Naive thymus-derived CD4-positive, alpha-beta T cell (primary cell): ENCODE measurements at regions of chr2 and their contacts with region 1.

Region 1: GRCh38 chr2:86440631-86441391 is at the start of gene KDM3A:
- DNase-seq: peak; percentile 95 to 100 (median 99)
- ATAC-seq: peak; percentile 87
- H3K4me3 ChIP-seq: peak within 1 kb of the TSS; percentile 88
- H3K4me3 Mint-ChIP-seq: peak within 1 kb of the TSS; percentile 92 to 99 (median 97)
- H3K27ac ChIP-seq: peak within 1 kb of the TSS; percentile 78
- H3K27ac Mint-ChIP-seq: peak within 1 kb of the TSS; percentile 97 to 99 (median 99)
- H3K4me1 ChIP-seq: peaks cover 31 to 34% of the 10 kb centered on the region in 2 donors
- H3K4me1 Mint-ChIP-seq: peaks cover 34 to 51% (median 44%) of the 10 kb centered on the region in 7 donors
- H3K27me3 ChIP-seq: no peaks in the 10 kb centered on the region
- H3K27me3 Mint-ChIP-seq: peaks cover 0 to 10% (median 0%) of the 10 kb centered on the region in 5 donors
- total RNA-seq, gene KDM3A: 132 to 191 (median 169) TPM

Region 2: GRCh38 chr2:85611705-85612587 is 828.9 kb before region 1 on chr2 and contains the start of gene C2orf68:
- CTCF ChIA-PET with region 1: no interaction called
- POLR2A ChIA-PET with region 1: interaction called, 3 read pairs
- intact Hi-C with region 1: loop called (anchors 1 to 10 kb)
- DNase-seq: peak; percentile 61 to 92 (median 75)
- ATAC-seq: peak; percentile 76
- H3K4me3 ChIP-seq: peak within 1 kb of the TSS; percentile 65
- H3K4me3 Mint-ChIP-seq: peak within 1 kb of the TSS; percentile 96 to 100 (median 98)
- H3K27ac ChIP-seq: peak within 1 kb of the TSS; percentile 81
- H3K27ac Mint-ChIP-seq: peak within 1 kb of the TSS; percentile 86 to 99 (median 96)
- H3K4me1 ChIP-seq: peaks cover 11 to 16% of the 10 kb centered on the region in 2 donors
- H3K4me1 Mint-ChIP-seq: peaks cover 14 to 52% (median 44%) of the 10 kb centered on the region in 7 donors
- H3K27me3 ChIP-seq: no peaks in the 10 kb centered on the region
- H3K27me3 Mint-ChIP-seq: no peaks in the 10 kb centered on the region
- total RNA-seq, gene C2orf68: 40.9 to 92.1 (median 51.6) TPM

Region 3: DNA sequence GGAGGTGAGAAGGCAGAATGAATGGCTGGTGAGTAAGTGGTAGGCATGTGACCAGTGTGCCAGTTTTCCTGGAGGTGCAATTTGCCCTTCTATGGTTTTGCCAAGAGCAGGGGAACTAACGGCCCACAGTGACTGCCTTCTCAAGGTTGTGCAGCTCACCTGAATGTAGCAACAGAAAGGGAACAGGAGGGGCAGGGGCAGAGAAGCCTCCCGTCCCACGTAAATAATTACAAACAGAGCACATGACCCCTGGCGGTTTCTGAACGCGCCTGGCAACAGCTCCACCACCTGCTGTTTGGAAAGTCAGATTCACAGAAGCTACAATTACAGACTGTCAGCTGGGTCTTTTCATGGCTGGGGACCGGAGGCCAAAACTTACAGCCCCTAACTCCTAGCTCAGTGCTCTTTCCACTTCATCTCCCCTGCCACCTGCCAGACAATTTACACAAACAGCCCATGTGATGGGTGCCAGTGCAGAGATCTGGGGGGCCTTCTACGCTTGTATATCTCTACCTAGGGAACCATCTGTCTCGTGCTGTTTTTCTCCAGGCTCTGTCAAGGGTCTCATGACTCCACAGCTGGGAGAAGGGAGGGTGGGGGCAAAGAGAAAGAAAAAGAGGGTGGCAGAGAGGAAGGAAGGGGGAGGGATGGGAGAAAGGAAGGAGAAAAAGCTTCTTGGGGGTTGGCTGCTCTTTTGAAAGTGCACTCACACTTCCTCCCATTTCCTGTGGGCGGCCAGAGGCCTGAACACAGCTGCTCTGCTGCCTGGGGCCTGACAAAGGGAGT is 404.7 kb before region 1 on chr2:
- CTCF ChIA-PET with region 1: no interaction called
- POLR2A ChIA-PET with region 1: interaction called, 7 read pairs
- intact Hi-C with region 1: loop called (anchors 2 to 5 kb)
- DNase-seq: peak in 8 of 9 donors; percentile 63 to 89 (median 84)
- ATAC-seq: peak; percentile 65
- H3K4me3 ChIP-seq: peak overlapping the region; percentile 48
- H3K4me3 Mint-ChIP-seq: peak overlapping the region; percentile 80 to 88 (median 86)
- H3K27ac ChIP-seq: peak overlapping the region; percentile 88
- H3K27ac Mint-ChIP-seq: peak overlapping the region; percentile 94 to 100 (median 100)
- H3K4me1 ChIP-seq: peaks cover 55 to 84% of the 10 kb centered on the region in 2 donors
- H3K4me1 Mint-ChIP-seq: peaks cover 57 to 92% (median 88%) of the 10 kb centered on the region in 7 donors
- H3K27me3 ChIP-seq: no peaks in the 10 kb centered on the region
- H3K27me3 Mint-ChIP-seq: peaks cover 0 to 5% (median 0%) of the 10 kb centered on the region in 5 donors

Region 4: GRCh38 chr2:86201671-86202335 is 239.0 kb before region 1 on chr2:
- CTCF ChIA-PET with region 1: no interaction called
- POLR2A ChIA-PET with region 1: interaction called, 43 read pairs
- intact Hi-C with region 1: loop called (anchors 1 kb)
- DNase-seq: no peak
- ATAC-seq: no peak
- H3K4me3 ChIP-seq: no peak overlapping the region
- H3K4me3 Mint-ChIP-seq: peak overlapping the region in 8 of 10 donors; percentile 27 to 95 (median 46)
- H3K27ac ChIP-seq: no peak overlapping the region
- H3K27ac Mint-ChIP-seq: peak overlapping the region in 5 of 9 donors; percentile 6 to 82 (median 55)
- H3K4me1 ChIP-seq: peaks cover 0 to 4% of the 10 kb centered on the region in 2 donors
- H3K4me1 Mint-ChIP-seq: peaks cover 22 to 58% (median 45%) of the 10 kb centered on the region in 7 donors
- H3K27me3 ChIP-seq: no peaks in the 10 kb centered on the region
- H3K27me3 Mint-ChIP-seq: no peaks in the 10 kb centered on the region

Region 5: DNA sequence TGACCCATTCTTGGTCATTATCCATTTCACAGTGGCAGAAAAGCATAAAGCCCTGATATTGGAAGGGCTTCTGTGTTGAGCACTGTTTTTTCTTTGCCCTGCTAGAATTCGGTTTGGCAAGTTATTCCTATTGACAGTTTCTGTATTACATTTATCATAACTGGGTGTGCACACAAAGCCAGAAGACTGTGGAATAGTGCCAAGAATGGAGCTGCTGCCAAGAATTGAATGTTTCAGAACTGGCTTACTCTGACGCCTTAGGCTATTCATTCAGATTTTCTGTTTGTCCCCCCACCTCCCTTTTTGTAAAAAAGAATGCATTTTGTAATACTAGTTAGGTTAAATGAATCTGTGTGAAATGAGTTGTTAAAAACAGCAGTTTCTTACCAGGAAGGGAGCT is 13.0 kb after region 1 on chr2:
- CTCF ChIA-PET with region 1: interaction called, 4 read pairs
- POLR2A ChIA-PET with region 1: interaction called, 40 read pairs
- intact Hi-C with region 1: no loop called
- DNase-seq: no peak
- ATAC-seq: no peak
- H3K4me3 ChIP-seq: no peak overlapping the region
- H3K4me3 Mint-ChIP-seq: no peak overlapping the region
- H3K27ac ChIP-seq: no peak overlapping the region
- H3K27ac Mint-ChIP-seq: no peak overlapping the region
- H3K4me1 ChIP-seq: peaks cover 0 to 7% of the 10 kb centered on the region in 2 donors
- H3K4me1 Mint-ChIP-seq: peaks cover 21 to 59% (median 42%) of the 10 kb centered on the region in 7 donors
- H3K27me3 ChIP-seq: no peaks in the 10 kb centered on the region
- H3K27me3 Mint-ChIP-seq: no peaks in the 10 kb centered on the region

Region 6: GRCh38 chr2:86480105-86480504 is 39.3 kb after region 1 on chr2:
- CTCF ChIA-PET with region 1: no interaction called
- POLR2A ChIA-PET with region 1: interaction called, 12 read pairs
- intact Hi-C with region 1: no loop called
- DNase-seq: no peak
- ATAC-seq: no peak
- H3K4me3 ChIP-seq: no peak overlapping the region
- H3K4me3 Mint-ChIP-seq: no peak overlapping the region
- H3K27ac ChIP-seq: no peak overlapping the region
- H3K27ac Mint-ChIP-seq: peak overlapping the region in 7 of 9 donors; percentile 5 to 64 (median 12)
- H3K4me1 ChIP-seq: no peaks in the 10 kb centered on the region
- H3K4me1 Mint-ChIP-seq: peaks cover 2 to 55% (median 24%) of the 10 kb centered on the region in 7 donors
- H3K27me3 ChIP-seq: no peaks in the 10 kb centered on the region
- H3K27me3 Mint-ChIP-seq: no peaks in the 10 kb centered on the region

Region 7: GRCh38 chr2:86623651-86624541 is 183.1 kb after region 1 on chr2 and contains the start of gene RNF103:
- CTCF ChIA-PET with region 1: interaction called, 4 read pairs
- POLR2A ChIA-PET with region 1: interaction called, 26 read pairs
- intact Hi-C with region 1: loop called (anchors 1 kb)
- DNase-seq: peak; percentile 83 to 97 (median 88)
- ATAC-seq: peak; percentile 93
- H3K4me3 ChIP-seq: peak within 1 kb of the TSS; percentile 85
- H3K4me3 Mint-ChIP-seq: peak within 1 kb of the TSS; percentile 86 to 99 (median 93)
- H3K27ac ChIP-seq: peak within 1 kb of the TSS; percentile 97
- H3K27ac Mint-ChIP-seq: peak within 1 kb of the TSS; percentile 90 to 99 (median 94)
- H3K4me1 ChIP-seq: peaks cover 11 to 17% of the 10 kb centered on the region in 2 donors
- H3K4me1 Mint-ChIP-seq: peaks cover 21 to 42% (median 34%) of the 10 kb centered on the region in 7 donors
- H3K27me3 ChIP-seq: no peaks in the 10 kb centered on the region
- H3K27me3 Mint-ChIP-seq: peaks cover 0 to 30% (median 0%) of the 10 kb centered on the region in 5 donors
- total RNA-seq, gene RNF103: 15.6 to 71.2 (median 37.8) TPM